HepG2 (cell line): ENCODE measurements at regions of chr15 and their contacts with region 1.

Region 1: GRCh38 chr15:27679731-27680471 is 419.2 kb downstream of the OCA2 start:
- DNase-seq: no peak
- ATAC-seq: no peak
- H3K4me3 ChIP-seq: no peak overlapping the region
- H3K27ac ChIP-seq: no peak overlapping the region
- H3K4me1 ChIP-seq: no peaks in the 10 kb centered on the region
- H3K27me3 ChIP-seq: peaks cover 0 to 5% of the 10 kb centered on the region in 2 experiments; a peak in 2 of 5 replicates
- CTCF ChIP-seq: no peak
- EP300 ChIP-seq: no peak
- POLR2A ChIP-seq: no peak
- RAD21 ChIP-seq: no peak

Region 2: DNA sequence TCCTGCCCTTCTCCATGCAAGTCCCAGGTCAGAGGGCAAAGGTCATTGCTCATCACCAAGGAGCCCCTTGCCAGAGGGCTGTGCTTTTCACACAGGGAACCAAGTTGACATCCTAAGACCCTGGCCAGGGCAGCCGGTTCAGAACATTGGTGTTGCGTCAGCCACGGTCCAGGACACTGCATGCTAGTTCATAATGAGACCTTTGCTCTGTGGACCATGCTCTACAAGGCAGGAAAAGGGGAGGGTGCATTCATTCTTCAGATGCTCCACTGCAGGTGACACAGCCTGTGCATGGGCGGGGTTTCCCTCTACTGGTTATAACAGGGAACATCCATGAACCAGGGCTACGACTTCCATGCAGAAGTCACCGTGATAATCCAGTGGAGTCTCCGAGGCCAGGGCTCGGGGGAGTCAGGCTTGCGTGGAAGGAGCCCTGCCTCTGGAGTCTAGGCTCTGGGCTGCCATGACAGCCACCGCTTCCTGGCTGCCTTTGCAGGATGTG is 337.6 kb after region 1 on chr15:
- CTCF ChIA-PET with region 1: interaction called, 5 read pairs
- POLR2A ChIA-PET with region 1: no interaction called
- in situ Hi-C with region 1: loop called (anchors 10 kb)
- intact Hi-C with region 1: no loop called
- DNase-seq: peak; percentile 73
- ATAC-seq: peak; percentile 89
- H3K4me3 ChIP-seq: no peak overlapping the region
- H3K27ac ChIP-seq: no peak overlapping the region
- H3K4me1 ChIP-seq: peaks cover 24% of the 10 kb centered on the region
- H3K27me3 ChIP-seq: no peaks in the 10 kb centered on the region
- CTCF ChIP-seq: peak; percentile 69
- EP300 ChIP-seq: 0 out of 4 replicates have a peak, but pooled peaks have one; percentile 9 to 32
- POLR2A ChIP-seq: no peak
- RAD21 ChIP-seq: 0 out of 2 replicates have a peak, but pooled peaks have one; percentile 16